ENCODE measurements at regions of chr10 and their contacts with region 1.

Region 1: DNA sequence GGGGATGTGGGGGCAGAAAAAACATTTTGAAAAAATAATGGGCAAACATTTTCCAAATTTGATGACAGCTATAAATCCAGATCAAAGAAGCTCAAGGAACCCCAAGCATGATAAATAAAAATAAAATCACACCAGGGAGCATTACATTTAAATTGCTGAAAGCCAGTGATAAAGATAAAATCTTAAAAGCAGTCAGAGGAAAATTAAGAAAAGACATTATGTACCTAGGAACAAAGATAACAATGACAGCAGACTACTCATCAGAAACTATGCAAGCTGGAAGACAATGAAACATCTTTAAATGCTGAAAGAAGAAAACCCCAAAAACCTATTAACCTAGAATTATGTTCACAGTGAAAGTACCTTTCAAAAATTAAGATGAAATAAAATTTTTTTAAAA is 23.3 kb downstream of the NEUROG3 start:
- DNase-seq: no peak
- H3K4me3 ChIP-seq: no peak overlapping the region
- H3K27ac ChIP-seq: no peak overlapping the region
- H3K4me1 ChIP-seq: no peaks in the 10 kb centered on the region
- H3K27me3 ChIP-seq: peaks cover 0 to 13% of the 10 kb centered on the region in 2 donors
- CTCF ChIP-seq: no peak
- POLR2A ChIP-seq: no peak

Region 2: DNA sequence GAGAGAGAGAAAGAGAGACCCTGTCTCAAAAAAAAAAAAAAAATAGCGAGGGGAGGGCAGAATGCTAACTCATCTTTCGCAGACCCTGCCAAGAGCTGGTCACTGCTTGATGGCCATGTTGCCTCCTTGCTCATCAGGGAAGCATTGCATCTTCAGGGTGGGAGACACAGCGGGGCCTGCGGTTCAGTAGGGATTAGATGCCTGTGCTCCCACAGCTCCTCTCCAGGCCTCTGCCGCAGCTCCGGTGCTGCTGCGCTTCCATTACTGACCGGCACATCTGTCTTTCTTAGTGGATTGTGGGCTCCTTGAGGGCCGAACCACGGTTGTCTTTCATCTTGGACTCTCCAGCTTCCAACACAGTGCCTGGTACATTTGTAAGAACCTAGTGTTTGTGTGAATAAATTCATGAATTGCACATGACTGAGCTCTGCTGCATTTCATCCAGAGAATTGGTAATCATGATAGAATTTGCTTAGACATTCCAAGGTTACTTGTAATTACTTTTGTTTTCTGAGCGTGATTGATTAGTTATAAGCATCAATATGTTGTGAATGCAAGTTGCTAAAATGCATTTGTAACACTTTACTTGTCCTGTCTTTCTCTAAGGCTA is 254.8 kb before region 1 on chr10:
- intact Hi-C with region 1: loop called (anchors 5 kb)
- DNase-seq: no peak
- H3K4me3 ChIP-seq: no peak overlapping the region
- H3K27ac ChIP-seq: no peak overlapping the region
- H3K4me1 ChIP-seq: no peaks in the 10 kb centered on the region
- H3K27me3 ChIP-seq: no peaks in the 10 kb centered on the region
- CTCF ChIP-seq: no peak
- POLR2A ChIP-seq: no peak